ENCODE measurements at regions of chr1 and their contacts with region 1.

Region 1: GRCh38 chr1:64268653-64269557 is 65.5 kb downstream of the UBE2U start:
- DNase-seq: peak; percentile 78 to 84 (median 80)
- ATAC-seq: peak; percentile 80
- H3K4me3 ChIP-seq: no peak overlapping the region
- H3K27ac ChIP-seq: no peak overlapping the region
- H3K4me1 ChIP-seq: peaks cover 4% of the 10 kb centered on the region
- H3K27me3 ChIP-seq: no peaks in the 10 kb centered on the region
- CTCF ChIP-seq: peak; percentile 50 to 88 (median 83)
- POLR2A ChIP-seq: no peak

Region 2: DNA sequence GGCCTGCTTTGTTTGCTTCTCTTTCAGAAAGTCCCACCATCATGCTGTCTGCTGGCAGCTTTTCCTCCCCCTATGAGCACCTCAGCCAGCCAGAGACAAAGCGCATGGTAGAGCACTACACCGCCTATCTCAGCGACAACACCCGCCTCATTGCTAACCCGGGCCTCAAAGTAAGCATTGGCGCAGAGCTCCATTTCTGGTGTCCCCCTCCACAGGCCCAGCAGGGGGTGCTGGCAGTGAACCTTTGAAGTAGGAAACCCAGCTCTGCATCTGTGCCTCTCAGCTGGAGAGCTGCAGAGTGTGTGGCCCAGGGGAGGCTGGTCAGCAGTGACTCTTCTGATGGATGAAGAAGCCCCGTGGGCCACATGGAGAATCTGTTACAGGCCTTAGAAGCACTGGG is 394.8 kb after region 1 on chr1:
- intact Hi-C with region 1: loop called (anchors 10 kb)
- DNase-seq: peak in 2 of 4 donors; percentile 7 to 21
- ATAC-seq: no peak
- H3K4me3 ChIP-seq: no peak overlapping the region
- H3K27ac ChIP-seq: no peak overlapping the region
- H3K4me1 ChIP-seq: no peaks in the 10 kb centered on the region
- H3K27me3 ChIP-seq: no peaks in the 10 kb centered on the region
- CTCF ChIP-seq: peak in 1 of 7 experiments; percentile 11
- POLR2A ChIP-seq: no peak